ENCODE measurements at regions of chr9 and their contacts with region 1.

Region 1: DNA sequence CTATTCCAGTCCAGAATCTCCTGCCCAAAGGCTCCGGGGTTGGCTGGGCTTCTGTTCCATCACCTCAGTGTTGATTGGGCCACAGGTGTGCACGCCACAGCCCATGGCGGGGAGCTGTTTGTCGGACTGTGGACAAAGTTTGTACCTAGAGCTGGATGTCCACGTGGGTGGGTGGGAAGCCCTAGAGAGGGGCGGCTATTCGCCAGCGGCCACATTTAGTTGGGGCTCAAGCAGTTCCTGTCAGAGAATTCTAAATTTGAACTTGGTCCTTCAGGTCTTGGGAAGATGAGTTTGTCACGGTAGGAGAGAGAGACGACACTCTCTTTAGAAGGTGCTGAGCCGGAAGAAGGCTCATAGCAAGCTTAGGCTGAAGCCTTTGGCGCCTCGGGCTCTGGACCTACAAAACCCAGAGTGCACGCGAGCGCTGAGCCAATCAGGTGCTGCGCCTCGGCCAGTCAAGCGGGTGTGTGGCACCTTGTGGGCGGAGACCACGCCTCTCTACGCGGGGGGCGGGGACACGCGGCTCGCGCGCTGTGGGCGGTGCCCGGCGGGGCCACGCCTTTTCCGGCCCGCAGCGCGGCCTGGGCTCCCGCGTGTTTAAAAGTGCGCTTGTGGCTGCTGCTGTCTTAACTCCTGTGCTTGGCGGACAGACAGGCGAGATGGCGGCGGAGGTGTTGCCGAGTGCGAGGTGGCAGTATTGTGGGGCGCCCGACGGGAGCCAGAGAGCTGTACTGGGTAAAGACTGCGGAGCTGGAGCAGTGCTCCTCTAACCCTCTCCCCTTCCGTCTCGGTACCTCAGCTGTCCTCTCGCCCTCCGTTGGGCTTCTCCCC is at the start of gene POLR1E:
- DNase-seq: peak; percentile 98
- ATAC-seq: peak; percentile 97
- H3K4me3 Mint-ChIP-seq: peak within 1 kb of the TSS; percentile 94
- H3K27ac Mint-ChIP-seq: peak within 1 kb of the TSS; percentile 93
- H3K4me1 Mint-ChIP-seq: peaks cover 41% of the 10 kb centered on the region
- H3K27me3 Mint-ChIP-seq: peaks cover 7% of the 10 kb centered on the region
- total RNA-seq, gene POLR1E: 67.5 to 69.2 TPM

Region 2: DNA sequence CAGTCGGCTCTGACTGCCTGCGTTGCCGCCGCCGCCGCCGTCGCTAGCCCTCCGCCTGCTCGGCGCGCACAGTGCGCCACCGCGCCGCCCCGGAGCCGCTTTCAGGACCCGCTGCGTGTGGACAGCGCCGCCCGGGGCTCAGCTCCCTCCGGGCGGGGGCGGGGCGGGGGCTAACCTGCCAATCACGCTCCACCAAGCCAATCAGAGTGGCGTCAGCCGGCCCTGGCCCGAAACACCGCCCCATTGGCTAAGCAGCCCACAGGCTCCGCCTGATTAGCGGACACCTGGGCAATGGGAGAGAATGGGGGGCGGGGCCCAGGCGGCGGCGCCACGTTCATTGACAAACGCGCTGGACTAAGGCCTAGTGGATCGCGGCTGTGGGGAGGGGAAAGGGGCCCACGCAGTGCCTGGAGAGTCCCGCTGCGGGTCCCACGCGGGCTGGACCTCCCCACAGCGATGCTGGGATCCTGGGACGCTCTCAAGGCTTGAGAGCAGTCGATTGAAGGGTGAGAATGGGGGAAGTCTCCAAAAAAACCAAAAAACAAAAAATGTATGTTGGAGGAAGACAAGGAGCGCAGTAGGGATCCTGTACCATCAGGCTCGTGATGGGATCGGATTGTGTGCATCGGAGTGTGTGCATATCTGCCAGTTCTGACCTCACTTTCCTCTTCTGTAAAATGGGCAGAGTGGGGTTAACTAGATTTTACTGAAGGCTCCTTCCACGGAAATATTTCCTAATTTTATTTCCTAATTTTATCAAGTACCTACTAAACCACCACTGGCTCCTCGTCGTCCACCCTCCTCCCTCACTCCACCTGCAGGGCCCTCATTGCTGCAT is 457.8 kb before region 1 on chr9:
- CTCF ChIA-PET with region 1: no interaction called
- POLR2A ChIA-PET with region 1: no interaction called
- intact Hi-C with region 1: loop called in 1 of 2 experiments (anchors 5 kb)
- DNase-seq: peak; percentile 96
- ATAC-seq: peak; percentile 97
- H3K4me3 Mint-ChIP-seq: peak overlapping the region; percentile 64
- H3K27ac Mint-ChIP-seq: no peak overlapping the region
- H3K4me1 Mint-ChIP-seq: peaks cover 37% of the 10 kb centered on the region
- H3K27me3 Mint-ChIP-seq: peaks cover 80% of the 10 kb centered on the region

Region 3: GRCh38 chr9:37415011-37415719 is 70.4 kb before region 1 on chr9:
- CTCF ChIA-PET with region 1: interaction called, 4 read pairs
- POLR2A ChIA-PET with region 1: no interaction called
- intact Hi-C with region 1: loop called in 1 of 2 experiments (anchors 2 kb)
- DNase-seq: peak; percentile 88
- ATAC-seq: peak; percentile 72
- H3K4me3 Mint-ChIP-seq: no peak overlapping the region
- H3K27ac Mint-ChIP-seq: peak overlapping the region; percentile 75
- H3K4me1 Mint-ChIP-seq: peaks cover 28% of the 10 kb centered on the region
- H3K27me3 Mint-ChIP-seq: no peaks in the 10 kb centered on the region

Region 4: DNA sequence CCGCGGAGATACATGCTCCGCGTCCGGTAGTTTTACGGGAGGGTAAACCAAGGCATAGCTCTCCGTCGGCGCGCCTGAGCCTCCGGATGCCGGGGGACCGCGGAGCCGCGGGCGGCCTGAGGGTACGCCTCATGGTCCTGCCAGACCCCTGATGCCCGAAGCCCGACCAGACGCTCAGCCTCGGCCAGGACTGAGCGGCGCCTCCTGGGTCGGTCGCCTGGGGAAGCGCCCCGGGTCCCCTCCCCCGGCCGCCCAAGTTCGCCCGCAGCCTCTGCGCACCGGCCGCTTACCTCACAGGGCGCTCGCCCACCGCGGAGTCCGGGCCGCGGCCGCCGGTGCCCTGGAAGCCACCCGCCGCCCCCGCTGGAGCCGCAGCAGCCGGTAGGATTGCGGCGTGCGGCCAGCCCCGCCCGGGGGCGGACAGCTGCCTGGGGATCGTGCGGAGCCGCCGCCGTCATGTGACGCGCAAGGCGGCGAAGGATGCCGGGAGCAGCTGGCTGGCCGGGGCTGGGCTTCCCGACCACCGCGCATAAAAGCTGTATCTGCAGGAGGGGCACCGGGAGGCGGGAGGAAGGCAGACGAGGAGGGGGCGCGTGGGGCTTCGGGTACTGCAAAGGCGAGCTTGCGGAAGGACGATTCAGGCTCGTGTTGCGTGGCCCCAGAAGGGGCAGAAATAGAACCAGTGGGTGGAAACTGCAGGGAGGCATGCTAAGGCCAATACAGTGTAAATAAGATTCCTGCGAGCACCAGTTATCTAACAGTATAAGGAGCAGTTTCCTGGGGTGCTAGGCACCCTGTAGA is 90.5 kb after region 1 on chr9 and contains the start of gene FBXO10:
- CTCF ChIA-PET with region 1: interaction called, 3 read pairs
- POLR2A ChIA-PET with region 1: no interaction called
- intact Hi-C with region 1: loop called in 1 of 2 experiments (anchors 5 kb)
- DNase-seq: peak; percentile 68
- ATAC-seq: peak; percentile 69
- H3K4me3 Mint-ChIP-seq: peak within 1 kb of the TSS; percentile 75
- H3K27ac Mint-ChIP-seq: peak within 1 kb of the TSS; percentile 63
- H3K4me1 Mint-ChIP-seq: peaks cover 17% of the 10 kb centered on the region
- H3K27me3 Mint-ChIP-seq: no peaks in the 10 kb centered on the region
- total RNA-seq, gene FBXO10: 2.6 TPM

Region 5: GRCh38 chr9:37784616-37785483 is 299.2 kb after region 1 on chr9 and contains the start of gene EXOSC3:
- CTCF ChIA-PET with region 1: no interaction called
- POLR2A ChIA-PET with region 1: no interaction called
- intact Hi-C with region 1: loop called (anchors 2 to 10 kb)
- DNase-seq: peak; percentile 93
- ATAC-seq: peak; percentile 90
- H3K4me3 Mint-ChIP-seq: peak within 1 kb of the TSS; percentile 98
- H3K27ac Mint-ChIP-seq: peak within 1 kb of the TSS; percentile 96
- H3K4me1 Mint-ChIP-seq: peaks cover 30% of the 10 kb centered on the region
- H3K27me3 Mint-ChIP-seq: no peaks in the 10 kb centered on the region
- total RNA-seq, gene EXOSC3: 86.9 to 117 TPM

Measured in activated CD4-positive, alpha-beta T cell treated with anti-CD3 and anti-CD28 coated beads for 36 hours (primary cell).